ENCODE measurements at regions of chr9 and their contacts with region 1.

Region 1: DNA sequence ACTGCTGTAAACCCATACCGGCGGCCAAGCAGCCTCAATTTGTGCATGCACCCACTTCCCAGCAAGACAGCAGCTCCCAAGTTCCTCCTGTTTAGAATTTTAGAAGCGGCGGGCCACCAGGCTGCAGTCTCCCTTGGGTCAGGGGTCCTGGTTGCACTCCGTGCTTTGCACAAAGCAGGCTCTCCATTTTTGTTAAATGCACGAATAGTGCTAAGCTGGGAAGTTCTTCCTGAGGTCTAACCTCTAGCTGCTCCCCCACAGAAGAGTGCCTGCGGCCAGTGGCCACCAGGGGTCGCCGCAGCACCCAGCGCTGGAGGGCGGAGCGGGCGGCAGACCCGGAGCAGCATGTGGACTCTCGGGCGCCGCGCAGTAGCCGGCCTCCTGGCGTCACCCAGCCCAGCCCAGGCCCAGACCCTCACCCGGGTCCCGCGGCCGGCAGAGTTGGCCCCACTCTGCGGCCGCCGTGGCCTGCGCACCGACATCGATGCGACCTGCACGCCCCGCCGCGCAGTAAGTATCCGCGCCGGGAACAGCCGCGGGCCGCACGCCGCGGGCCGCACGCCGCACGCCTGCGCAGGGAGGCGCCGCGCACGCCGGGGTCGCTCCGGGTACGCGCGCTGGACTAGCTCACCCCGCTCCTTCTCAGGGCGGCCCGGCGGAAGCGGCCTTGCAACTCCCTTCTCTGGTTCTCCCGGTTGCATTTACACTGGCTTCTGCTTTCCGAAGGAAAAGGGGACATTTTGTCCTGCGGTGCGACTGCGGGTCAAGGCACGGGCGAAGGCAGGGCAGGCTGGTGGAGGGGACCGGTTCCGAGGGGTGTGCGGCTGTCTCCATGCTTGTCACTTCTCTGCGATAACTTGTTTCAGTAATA is at the start of gene FXN:
- DNase-seq: peak; percentile 76
- H3K4me3 ChIP-seq: peak within 1 kb of the TSS; percentile 58 to 94 (median 91)
- H3K27ac ChIP-seq: peak within 1 kb of the TSS; percentile 35
- H3K4me1 ChIP-seq: peaks cover 7% of the 10 kb centered on the region
- H3K27me3 ChIP-seq: no peaks in the 10 kb centered on the region
- CTCF ChIP-seq: peak; percentile 92 to 99
- total RNA-seq, gene FXN: 5.5 to 19.6 TPM

Region 2: DNA sequence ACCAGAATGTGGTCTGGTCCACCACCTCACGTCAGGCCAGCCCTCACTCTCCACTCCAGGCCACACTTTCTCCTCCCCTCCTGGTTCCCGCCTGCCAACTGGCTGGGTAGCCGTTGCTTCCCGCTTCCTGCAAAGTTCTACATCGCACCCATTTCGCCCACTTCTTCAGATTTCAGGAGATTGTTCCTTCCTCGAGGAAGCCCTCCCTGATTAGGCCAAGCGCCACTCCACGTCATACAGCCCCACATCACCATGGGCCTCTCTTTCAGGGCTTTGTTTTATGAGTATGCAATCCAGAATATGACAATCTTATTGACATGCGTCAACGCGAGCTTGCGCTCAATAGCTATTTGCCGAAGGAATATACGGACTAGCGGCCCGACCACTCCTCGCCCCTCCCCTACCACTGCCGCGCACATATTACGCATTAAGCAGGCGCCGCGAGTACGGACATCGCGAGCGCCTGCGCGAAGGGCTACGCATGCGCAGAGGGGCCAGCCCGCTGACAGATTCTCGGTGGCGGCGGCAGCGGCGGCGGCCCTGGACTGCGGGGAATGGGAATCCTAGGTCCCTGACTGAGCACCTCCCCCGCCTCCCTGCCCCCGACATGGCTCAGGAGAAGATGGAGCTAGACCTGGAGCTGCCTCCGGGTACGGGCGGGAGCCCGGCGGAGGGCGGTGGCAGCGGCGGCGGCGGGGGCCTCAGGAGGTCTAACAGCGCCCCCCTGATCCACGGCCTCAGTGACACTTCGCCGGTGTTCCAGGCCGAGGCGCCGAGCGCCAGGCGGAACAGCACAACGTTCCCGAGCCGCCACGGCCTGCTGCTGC is 255.9 kb before region 1 on chr9:
- CTCF ChIA-PET with region 1: no interaction called
- dilution Hi-C with region 1: no loop called
- in situ Hi-C with region 1: no loop called
- intact Hi-C with region 1: loop called (anchors 5 kb)
- DNase-seq: peak; percentile 90
- H3K4me3 ChIP-seq: peak overlapping the region; percentile 57 to 80 (median 76)
- H3K27ac ChIP-seq: peak overlapping the region; percentile 74
- H3K4me1 ChIP-seq: peaks cover 16% of the 10 kb centered on the region
- H3K27me3 ChIP-seq: no peaks in the 10 kb centered on the region
- CTCF ChIP-seq: peak in 1 of 2 donors; percentile 33

Region 3: DNA sequence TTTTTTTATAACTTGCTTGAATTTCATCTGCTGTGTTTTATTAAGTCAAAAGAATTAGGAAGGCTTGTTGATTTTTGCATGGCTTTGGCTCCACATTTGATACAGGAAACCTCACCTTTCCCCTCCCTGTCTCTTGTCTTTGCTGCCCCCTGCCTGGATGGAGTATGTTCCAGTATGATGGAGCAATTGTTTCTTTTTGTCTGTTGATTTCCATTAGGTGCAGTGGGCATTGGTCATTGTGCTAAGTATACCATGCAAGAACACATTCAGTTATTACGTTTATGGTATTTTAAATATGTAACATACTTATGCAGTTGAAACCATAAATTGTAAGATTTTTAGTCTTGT is 158.0 kb after region 1 on chr9:
- CTCF ChIA-PET with region 1: no interaction called
- dilution Hi-C with region 1: loop called (anchors 10 kb)
- in situ Hi-C with region 1: no loop called
- intact Hi-C with region 1: loop called (anchors 1 kb)
- DNase-seq: no peak
- H3K4me3 ChIP-seq: no peak overlapping the region
- H3K27ac ChIP-seq: no peak overlapping the region
- H3K4me1 ChIP-seq: no peaks in the 10 kb centered on the region
- H3K27me3 ChIP-seq: no peaks in the 10 kb centered on the region
- CTCF ChIP-seq: peak in 1 of 2 donors; percentile 25

Region 4: DNA sequence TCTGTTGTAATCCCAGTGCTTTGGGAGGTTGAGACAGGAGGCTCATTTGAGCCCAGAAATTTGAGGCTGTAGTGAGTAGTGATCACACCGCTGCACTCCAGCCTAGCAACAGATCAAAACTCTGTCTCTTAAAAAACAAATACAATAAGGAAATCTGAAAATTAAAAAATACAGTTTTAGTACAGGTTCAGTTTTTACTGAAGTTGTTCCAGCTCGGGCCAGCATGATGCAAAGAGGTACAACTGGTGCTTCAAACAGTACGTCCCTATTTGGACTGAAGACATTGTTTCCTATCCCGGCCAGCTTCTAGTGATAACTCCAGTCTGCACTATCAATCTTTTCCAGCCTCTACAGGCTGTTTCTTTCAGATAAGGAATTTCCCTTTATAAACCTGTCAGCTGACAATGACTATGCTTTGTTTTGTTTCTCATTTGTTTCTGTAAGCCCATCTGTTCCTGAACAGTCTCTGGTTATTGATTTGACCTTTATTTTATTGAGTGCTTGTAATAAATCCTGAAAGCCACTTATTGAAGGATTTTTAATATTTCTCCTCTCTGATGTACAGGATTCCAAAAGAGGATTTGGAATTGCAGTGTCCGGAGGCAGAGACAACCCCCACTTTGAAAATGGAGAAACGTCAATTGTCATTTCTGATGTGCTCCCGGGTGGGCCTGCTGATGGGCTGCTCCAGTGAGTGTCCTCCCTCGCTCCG is 180.3 kb after region 1 on chr9:
- CTCF ChIA-PET with region 1: interaction called, 35 read pairs
- dilution Hi-C with region 1: no loop called
- in situ Hi-C with region 1: no loop called
- intact Hi-C with region 1: no loop called
- DNase-seq: no peak
- H3K4me3 ChIP-seq: no peak overlapping the region
- H3K27ac ChIP-seq: no peak overlapping the region
- H3K4me1 ChIP-seq: no peaks in the 10 kb centered on the region
- H3K27me3 ChIP-seq: no peaks in the 10 kb centered on the region
- CTCF ChIP-seq: no peak

Region 5: DNA sequence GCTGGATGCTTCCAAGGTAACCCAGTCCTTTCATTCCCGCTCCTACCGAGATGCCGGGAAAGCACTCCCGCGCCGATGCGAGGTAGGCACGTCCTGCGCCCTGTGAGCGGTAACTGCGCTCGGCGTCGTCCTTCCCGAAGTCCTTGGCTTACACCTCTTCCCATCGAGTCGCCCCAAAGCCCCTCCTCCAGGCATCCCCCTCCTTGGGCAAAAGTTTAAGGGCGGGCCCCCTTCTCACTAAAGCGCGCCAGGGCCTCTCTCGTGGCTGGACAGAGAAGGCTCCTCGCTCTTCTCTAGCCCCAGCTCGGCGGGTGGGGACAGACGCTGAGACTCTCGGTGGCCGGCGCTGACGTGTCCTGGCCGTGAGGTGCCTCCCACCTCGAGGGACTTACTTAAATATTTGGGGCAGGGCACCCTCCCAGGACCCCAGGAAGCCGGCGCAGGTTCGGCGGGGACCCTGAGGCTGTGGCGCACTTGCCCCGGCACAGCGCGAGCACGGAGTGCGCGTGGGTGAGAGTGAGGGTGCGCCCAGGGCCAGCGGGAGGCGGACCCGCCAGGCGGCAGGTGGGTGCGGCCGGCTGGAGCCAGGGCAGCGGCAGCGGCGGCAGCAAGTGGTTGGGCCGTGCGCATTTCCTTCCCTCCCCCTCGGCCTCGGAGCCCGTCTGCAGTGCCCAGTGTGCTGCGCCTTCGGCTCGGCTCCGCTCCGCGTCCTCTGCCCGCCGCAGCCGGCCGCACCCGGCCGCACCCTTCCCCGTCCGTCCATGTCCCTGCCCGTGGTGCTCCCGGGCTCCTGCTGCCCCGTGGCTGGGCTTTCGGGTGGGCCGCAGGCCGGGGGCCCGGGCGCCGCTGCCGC is 289.1 kb after region 1 on chr9 and contains the start of gene ENTREP1:
- CTCF ChIA-PET with region 1: no interaction called
- dilution Hi-C with region 1: no loop called
- in situ Hi-C with region 1: no loop called
- intact Hi-C with region 1: loop called (anchors 10 kb)
- DNase-seq: peak; percentile 75
- H3K4me3 ChIP-seq: peak within 1 kb of the TSS; percentile 54 to 69 (median 61)
- H3K27ac ChIP-seq: no peak within 1 kb of the TSS
- H3K4me1 ChIP-seq: peaks cover 13% of the 10 kb centered on the region
- H3K27me3 ChIP-seq: no peaks in the 10 kb centered on the region
- CTCF ChIP-seq: peak in 1 of 2 donors; percentile 45
- total RNA-seq, gene ENTREP1: 6.2 to 12.5 TPM

Region 6: GRCh38 chr9:69932901-69933300 is 897.2 kb after region 1 on chr9:
- CTCF ChIA-PET with region 1: interaction called, 4 read pairs
- dilution Hi-C with region 1: no loop called
- in situ Hi-C with region 1: no loop called
- intact Hi-C with region 1: loop called (anchors 5 kb)
- DNase-seq: no peak
- H3K4me3 ChIP-seq: no peak overlapping the region
- H3K27ac ChIP-seq: no peak overlapping the region
- H3K4me1 ChIP-seq: peaks cover 10% of the 10 kb centered on the region
- H3K27me3 ChIP-seq: no peaks in the 10 kb centered on the region
- CTCF ChIP-seq: peak; percentile 35 to 50

Measured in mammary epithelial cell (primary cell).